Activated CD8-positive, alpha-beta T cell treated with anti-CD3 and anti-CD28 coated beads for 36 hours (primary cell): ENCODE measurements at regions of chr2 and their contacts with region 1.

Region 1: DNA sequence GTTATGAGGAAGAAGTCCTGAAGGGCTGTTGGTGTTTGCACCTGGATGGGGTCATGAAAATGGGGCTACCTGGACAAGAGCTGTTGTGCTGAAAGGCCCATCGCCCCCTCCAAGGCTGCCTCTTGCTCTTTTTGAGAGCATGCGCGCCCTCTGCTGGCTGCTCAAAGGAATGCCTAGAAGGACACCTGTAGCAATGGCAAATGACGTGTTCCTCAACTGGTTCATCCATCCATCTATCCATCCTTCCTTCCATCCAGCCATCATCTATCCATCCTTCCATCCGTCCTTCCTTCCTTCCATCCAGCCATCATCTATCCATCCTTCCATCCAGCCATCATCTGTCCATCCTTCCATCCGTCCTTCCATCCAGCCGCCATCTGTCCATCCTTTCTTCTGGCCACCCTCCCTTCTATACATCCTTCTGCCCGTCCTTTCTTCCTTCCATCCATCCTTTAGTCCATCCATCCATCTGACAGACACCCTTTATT is 17.2 kb upstream of the RPL31 start:
- DNase-seq: peak; percentile 85
- ATAC-seq: peak; percentile 88
- H3K4me3 Mint-ChIP-seq: no peak overlapping the region
- H3K27ac Mint-ChIP-seq: no peak overlapping the region
- H3K4me1 Mint-ChIP-seq: no peaks in the 10 kb centered on the region
- H3K27me3 Mint-ChIP-seq: no peaks in the 10 kb centered on the region
- CTCF ChIP-seq: peak; percentile 85

Region 2: DNA sequence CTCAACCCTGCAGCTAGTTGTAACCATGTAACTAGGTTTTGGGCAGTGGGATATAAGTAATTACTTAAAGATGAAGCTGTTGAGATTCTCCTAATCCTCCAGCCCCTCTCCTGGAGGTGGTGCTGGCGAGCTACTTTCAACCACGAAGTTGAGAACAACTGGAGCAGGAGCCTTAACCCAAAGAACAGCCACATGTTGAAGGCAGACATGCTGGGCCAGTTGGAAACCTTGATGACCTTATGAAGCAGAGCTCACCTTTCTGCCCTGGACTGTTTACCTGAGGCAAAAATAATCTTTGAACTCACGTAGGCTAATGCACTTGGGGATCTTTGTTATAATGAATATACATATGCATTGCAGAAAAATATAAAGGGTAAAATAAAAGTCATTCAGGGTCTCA is 254.6 kb before region 1 on chr2:
- CTCF ChIA-PET with region 1: interaction called, 20 read pairs
- POLR2A ChIA-PET with region 1: no interaction called
- intact Hi-C with region 1: loop called (anchors 2 kb)
- DNase-seq: peak; percentile 72
- ATAC-seq: peak; percentile 61
- H3K4me3 Mint-ChIP-seq: no peak overlapping the region
- H3K27ac Mint-ChIP-seq: no peak overlapping the region
- H3K4me1 Mint-ChIP-seq: peaks cover 6% of the 10 kb centered on the region
- H3K27me3 Mint-ChIP-seq: peaks cover 1% of the 10 kb centered on the region
- CTCF ChIP-seq: peak; percentile 57

Region 3: GRCh38 chr2:100957996-100958653 is 26.8 kb before region 1 on chr2:
- CTCF ChIA-PET with region 1: no interaction called
- POLR2A ChIA-PET with region 1: no interaction called
- intact Hi-C with region 1: no loop called
- DNase-seq: no peak
- ATAC-seq: no peak
- H3K4me3 Mint-ChIP-seq: no peak overlapping the region
- H3K27ac Mint-ChIP-seq: no peak overlapping the region
- H3K4me1 Mint-ChIP-seq: peaks cover 9% of the 10 kb centered on the region
- H3K27me3 Mint-ChIP-seq: no peaks in the 10 kb centered on the region
- CTCF ChIP-seq: no peak

Region 4: GRCh38 chr2:100968146-100969145 is 16.5 kb before region 1 on chr2:
- CTCF ChIA-PET with region 1: no interaction called
- POLR2A ChIA-PET with region 1: no interaction called
- intact Hi-C with region 1: no loop called
- DNase-seq: no peak
- ATAC-seq: no peak
- H3K4me3 Mint-ChIP-seq: no peak overlapping the region
- H3K27ac Mint-ChIP-seq: no peak overlapping the region
- H3K4me1 Mint-ChIP-seq: peaks cover 8% of the 10 kb centered on the region
- H3K27me3 Mint-ChIP-seq: no peaks in the 10 kb centered on the region
- CTCF ChIP-seq: no peak